Right lobe of liver (tissue), 6 donors: ENCODE measurements at regions of chr18 and their contacts with region 1.

Region 1: DNA sequence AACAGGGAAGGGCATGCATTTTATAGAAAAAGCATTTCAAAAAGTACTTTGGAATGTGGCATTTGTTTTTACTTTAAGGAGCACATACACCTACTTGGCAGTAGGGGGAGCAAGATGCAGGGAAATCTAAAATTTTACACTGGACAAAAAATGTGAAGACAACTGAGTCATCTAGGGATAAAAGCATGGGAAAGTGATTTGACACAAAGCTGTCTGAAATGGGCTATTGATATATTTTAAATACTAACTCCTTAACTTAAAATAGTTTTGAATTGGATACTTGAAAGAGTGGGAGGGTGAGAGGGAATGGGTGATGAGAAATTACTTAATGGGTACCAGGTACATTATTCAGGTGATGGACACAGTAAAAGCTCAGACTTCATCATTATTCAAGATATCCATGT is 15.8 kb downstream of the TMEM200C start:
- DNase-seq: no peak
- ATAC-seq: peak; percentile 66 to 86 (median 71)
- H3K4me3 ChIP-seq: no peak overlapping the region
- H3K27ac ChIP-seq: no peak overlapping the region
- H3K4me1 ChIP-seq: no peaks in the 10 kb centered on the region
- H3K27me3 ChIP-seq: no peaks in the 10 kb centered on the region
- CTCF ChIP-seq: peak; percentile 68 to 83 (median 76)
- POLR2A ChIP-seq: no peak

Region 2: DNA sequence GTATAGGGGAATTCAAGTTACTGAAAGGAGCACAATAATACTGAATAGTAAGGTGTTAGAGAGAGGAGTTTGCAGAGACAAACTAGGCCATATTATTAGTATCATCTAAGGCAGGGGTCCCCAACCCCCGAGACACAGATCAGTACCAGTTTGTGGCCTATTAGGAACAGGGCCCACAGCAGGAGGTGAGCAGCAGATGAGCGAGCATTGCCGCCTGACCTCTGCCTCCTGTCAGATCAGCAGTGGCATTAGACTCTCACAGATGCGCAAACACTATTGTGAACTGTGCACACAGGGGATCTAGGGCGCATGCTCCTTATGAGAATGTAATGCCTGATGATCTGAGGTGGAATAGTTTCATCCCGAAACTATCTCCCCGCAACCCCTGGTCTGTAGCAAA is 57.6 kb after region 1 on chr18:
- intact Hi-C with region 1: no loop called
- DNase-seq: no peak
- ATAC-seq: no peak
- H3K4me3 ChIP-seq: no peak overlapping the region
- H3K27ac ChIP-seq: no peak overlapping the region
- H3K4me1 ChIP-seq: no peaks in the 10 kb centered on the region
- H3K27me3 ChIP-seq: no peaks in the 10 kb centered on the region
- CTCF ChIP-seq: no peak
- POLR2A ChIP-seq: no peak

Region 3: GRCh38 chr18:6482198-6482977 is 602.9 kb after region 1 on chr18:
- intact Hi-C with region 1: loop called (anchors 10 kb)
- DNase-seq: peak; percentile 71 to 77 (median 71)
- ATAC-seq: peak; percentile 99 to 100 (median 99)
- H3K4me3 ChIP-seq: no peak overlapping the region
- H3K27ac ChIP-seq: no peak overlapping the region
- H3K4me1 ChIP-seq: peaks cover 0 to 7% (median 0%) of the 10 kb centered on the region in 4 donors
- H3K27me3 ChIP-seq: no peaks in the 10 kb centered on the region
- CTCF ChIP-seq: peak; percentile 88 to 95 (median 90)
- POLR2A ChIP-seq: no peak

Region 4: GRCh38 chr18:6509832-6510231 is 630.4 kb after region 1 on chr18:
- intact Hi-C with region 1: loop called in 1 of 2 experiments (anchors 10 kb)
- DNase-seq: no peak
- ATAC-seq: no peak
- H3K4me3 ChIP-seq: no peak overlapping the region
- H3K27ac ChIP-seq: no peak overlapping the region
- H3K4me1 ChIP-seq: no peaks in the 10 kb centered on the region
- H3K27me3 ChIP-seq: no peaks in the 10 kb centered on the region
- CTCF ChIP-seq: no peak
- POLR2A ChIP-seq: no peak